Mucosa of descending colon (tissue), 3 donors: ENCODE measurements at regions of chr13 and their contacts with region 1.

Region 1: GRCh38 chr13:41352935-41353840 is 42.1 kb downstream of the NAA16 start:
- DNase-seq: peak in 1 of 3 donors; percentile 60
- ATAC-seq: peak; percentile 71
- H3K4me3 ChIP-seq: no peak overlapping the region
- H3K4me1 ChIP-seq: no peaks in the 10 kb centered on the region
- CTCF ChIP-seq: peak; percentile 71

Region 2: GRCh38 chr13:41652727-41653361 is 299.7 kb after region 1 on chr13:
- intact Hi-C with region 1: loop called (anchors 10 kb)
- DNase-seq: peak in 1 of 3 donors; percentile 39
- ATAC-seq: no peak
- H3K4me3 ChIP-seq: no peak overlapping the region
- H3K4me1 ChIP-seq: no peaks in the 10 kb centered on the region
- CTCF ChIP-seq: no peak